ENCODE measurements at regions of chr6 and their contacts with region 1.

Region 1: DNA sequence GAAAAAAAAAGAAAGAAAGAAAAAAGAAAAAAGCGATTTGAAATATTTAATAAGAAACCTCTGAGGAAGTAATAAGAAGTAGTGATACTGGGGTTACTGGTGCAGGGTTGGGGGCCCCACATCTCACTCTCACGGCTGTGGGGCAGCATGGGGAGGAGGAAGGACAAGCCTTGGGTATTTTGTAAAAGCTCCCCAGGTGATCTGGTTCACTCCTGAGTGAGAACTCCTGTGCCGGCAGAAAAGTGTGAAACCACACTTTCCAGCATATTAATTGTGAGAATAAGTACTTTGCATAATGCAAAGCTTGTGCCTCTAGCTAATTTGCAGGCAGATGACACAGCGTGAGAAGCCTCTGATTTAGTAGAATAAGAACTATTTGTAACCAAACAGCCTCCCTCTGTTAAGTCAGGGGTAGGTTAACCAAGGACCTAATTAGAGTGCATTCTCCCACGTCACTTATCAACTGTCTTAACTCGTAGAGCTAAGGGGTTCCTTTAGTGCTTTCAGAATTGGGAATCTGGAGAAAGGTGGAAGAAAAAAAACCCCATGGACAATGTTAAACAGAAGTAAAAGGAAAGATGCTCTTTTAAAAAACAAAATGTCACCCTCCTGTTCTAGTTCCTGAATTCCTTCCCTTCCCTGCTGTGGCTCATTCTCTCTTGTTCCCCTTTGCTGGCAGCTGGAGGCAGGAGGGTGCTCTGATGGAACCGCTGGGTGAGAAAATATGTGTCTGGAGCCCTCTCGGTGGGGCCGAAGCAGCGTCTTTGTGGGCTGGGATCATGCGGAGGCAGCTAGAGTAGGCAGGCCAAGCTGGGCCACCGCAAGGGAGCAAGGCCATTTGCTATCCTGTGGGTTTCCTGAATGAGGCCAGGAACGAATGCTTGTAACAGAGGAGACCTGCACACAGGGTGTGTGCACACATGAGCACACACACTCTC is 108.7 kb downstream of the FYN start:
- DNase-seq: peak; percentile 69
- CTCF ChIP-seq: no peak

Region 2: DNA sequence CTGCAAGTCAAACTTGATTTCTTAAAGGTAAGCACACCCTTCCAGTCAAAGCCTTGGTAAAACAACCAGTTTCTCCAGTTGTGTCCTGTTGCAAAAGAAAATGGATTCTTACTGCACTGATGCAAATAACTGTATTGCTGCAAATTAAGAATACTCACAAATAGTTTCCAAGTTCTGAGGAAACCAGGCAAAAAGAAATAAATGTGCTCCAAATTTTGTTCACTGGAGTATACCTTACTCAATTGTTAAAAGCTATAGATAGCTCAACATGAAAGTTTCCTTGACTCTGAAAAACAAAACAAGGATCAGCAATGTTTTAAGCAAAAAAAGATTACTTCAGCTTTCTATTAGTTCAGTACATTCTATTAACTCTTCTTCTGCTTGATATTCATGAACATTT is 602.0 kb before region 1 on chr6:
- CTCF ChIA-PET with region 1: no interaction called
- POLR2A ChIA-PET with region 1: no interaction called
- DNase-seq: no peak
- CTCF ChIP-seq: no peak

Region 3: GRCh38 chr6:111468329-111469012 is 296.0 kb before region 1 on chr6:
- CTCF ChIA-PET with region 1: no interaction called
- POLR2A ChIA-PET with region 1: no interaction called
- DNase-seq: no peak
- CTCF ChIP-seq: no peak

Region 4: GRCh38 chr6:111631903-111632460 is 132.5 kb before region 1 on chr6:
- CTCF ChIA-PET with region 1: no interaction called
- POLR2A ChIA-PET with region 1: no interaction called
- DNase-seq: no peak
- CTCF ChIP-seq: no peak

Region 5: GRCh38 chr6:111727802-111728201 is 36.7 kb before region 1 on chr6:
- CTCF ChIA-PET with region 1: interaction called, 10 read pairs
- POLR2A ChIA-PET with region 1: no interaction called
- DNase-seq: no peak
- CTCF ChIP-seq: no peak

Region 6: GRCh38 chr6:111743862-111744692 is 20.4 kb before region 1 on chr6:
- CTCF ChIA-PET with region 1: interaction called, 10 read pairs
- POLR2A ChIA-PET with region 1: interaction called, 3 read pairs
- DNase-seq: no peak
- CTCF ChIP-seq: no peak

Region 7: DNA sequence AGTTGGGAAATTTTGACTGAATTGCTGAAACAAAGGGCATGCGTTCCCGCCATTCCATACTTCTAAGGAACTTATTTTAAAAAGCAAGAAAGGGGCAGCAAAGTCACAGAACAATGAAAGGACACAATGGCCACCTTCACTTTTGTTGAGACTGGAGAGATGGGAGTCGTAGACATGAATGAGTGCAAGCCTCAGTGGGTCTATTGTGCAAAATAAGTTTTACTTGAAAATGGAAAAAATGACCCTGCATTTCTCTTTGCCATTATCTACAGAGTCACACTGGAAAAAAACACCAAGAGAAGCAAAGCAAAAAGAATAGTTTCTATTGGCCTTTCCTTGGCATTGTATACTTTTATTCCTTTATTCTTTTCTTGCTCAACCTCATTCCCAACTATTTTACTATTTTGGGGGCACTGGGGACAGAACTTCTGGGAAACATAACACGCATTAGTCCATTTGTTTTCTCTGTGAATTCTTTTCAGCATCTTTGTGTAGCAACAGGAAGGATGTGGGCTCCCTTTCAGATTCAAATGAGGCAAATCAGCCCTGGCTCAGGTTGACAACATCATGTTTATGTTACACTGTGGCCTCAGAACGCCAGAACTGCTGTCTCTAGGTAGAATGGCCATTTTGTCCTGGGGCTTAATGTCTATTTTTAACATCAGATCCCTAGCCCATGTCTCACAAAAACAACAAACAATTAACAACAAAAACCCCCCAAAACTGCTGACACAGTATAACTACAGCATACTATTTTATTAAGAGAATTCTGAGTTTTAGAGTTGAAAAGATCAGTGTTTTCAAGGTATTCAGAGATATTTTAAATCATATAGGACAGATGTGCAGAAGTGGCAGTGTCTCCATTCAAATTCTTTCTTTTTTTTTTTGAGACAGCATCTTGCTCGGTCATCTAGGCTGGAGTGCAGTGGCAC is 13.5 kb before region 1 on chr6:
- CTCF ChIA-PET with region 1: interaction called, 22 read pairs
- POLR2A ChIA-PET with region 1: interaction called, 3 read pairs
- DNase-seq: peak; percentile 46
- CTCF ChIP-seq: no peak

Region 8: GRCh38 chr6:111777357-111777756 is 12.8 kb after region 1 on chr6:
- CTCF ChIA-PET with region 1: interaction called, 22 read pairs
- POLR2A ChIA-PET with region 1: no interaction called
- DNase-seq: no peak
- CTCF ChIP-seq: peak; percentile 14

Measured in GM10248 (cell line).